ENCODE measurements at regions of chr4 and their contacts with region 1.

Region 1: GRCh38 chr4:48546336-48546735 is 56.3 kb downstream of the ZAR1 start:
- DNase-seq: peak; percentile 51
- H3K4me3 ChIP-seq: no peak overlapping the region
- H3K27ac ChIP-seq: no peak overlapping the region
- H3K4me1 ChIP-seq: peaks cover 5% of the 10 kb centered on the region
- H3K27me3 ChIP-seq: no peaks in the 10 kb centered on the region
- CTCF ChIP-seq: peak; percentile 28 to 51
- POLR2A ChIP-seq: no peak

Region 2: DNA sequence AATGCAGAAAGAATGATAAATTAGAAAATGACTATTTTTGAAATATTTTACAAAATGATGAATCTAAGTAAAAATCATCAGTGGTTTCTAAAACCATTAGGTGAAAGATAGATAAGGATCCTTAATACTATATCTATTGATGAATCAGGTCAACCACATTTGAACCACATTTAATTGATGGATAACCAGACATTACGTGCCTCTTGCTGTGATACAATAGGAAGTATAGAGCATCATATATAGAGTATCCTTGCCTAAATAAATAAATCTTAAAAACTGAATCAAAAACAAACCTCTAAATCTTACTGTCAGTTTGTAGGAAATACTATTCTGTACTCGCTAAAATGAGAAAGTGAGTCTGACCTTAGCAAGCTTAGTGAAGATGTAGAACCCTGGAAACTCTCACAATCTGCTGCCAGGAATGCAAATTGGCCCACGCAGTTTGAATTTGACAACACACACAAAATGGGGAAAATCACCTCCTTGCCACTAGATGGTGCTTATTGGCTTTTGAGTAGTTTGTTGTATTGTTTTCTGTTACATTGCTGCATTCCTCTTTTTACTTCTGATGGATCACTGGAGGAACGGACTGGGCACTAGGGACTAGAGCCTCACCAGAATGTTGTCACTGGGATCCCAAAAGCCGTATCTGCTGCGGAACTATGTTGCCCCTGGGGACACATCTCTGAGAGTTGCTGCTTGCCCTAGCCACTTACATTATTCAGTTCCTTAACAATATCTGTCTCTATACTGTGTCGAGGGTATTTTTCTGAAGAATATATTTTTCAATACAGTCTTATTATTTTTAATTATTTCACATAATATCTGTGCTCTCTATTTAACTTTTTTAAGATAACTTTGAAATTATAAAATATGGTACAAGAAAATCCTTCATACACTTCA is 230.4 kb before region 1 on chr4:
- CTCF ChIA-PET with region 1: interaction called, 9 read pairs
- POLR2A ChIA-PET with region 1: no interaction called
- dilution Hi-C with region 1: no loop called
- intact Hi-C with region 1: loop called (anchors 1 kb)
- DNase-seq: peak; percentile 64
- H3K4me3 ChIP-seq: no peak overlapping the region
- H3K27ac ChIP-seq: no peak overlapping the region
- H3K4me1 ChIP-seq: no peaks in the 10 kb centered on the region
- H3K27me3 ChIP-seq: no peaks in the 10 kb centered on the region
- CTCF ChIP-seq: peak; percentile 57 to 69
- POLR2A ChIP-seq: no peak

Region 3: GRCh38 chr4:48445704-48446103 is 100.6 kb before region 1 on chr4:
- CTCF ChIA-PET with region 1: interaction called, 11 read pairs
- POLR2A ChIA-PET with region 1: no interaction called
- dilution Hi-C with region 1: no loop called
- intact Hi-C with region 1: loop called (anchors 5 kb)
- DNase-seq: peak; percentile 13
- H3K4me3 ChIP-seq: no peak overlapping the region
- H3K27ac ChIP-seq: no peak overlapping the region
- H3K4me1 ChIP-seq: no peaks in the 10 kb centered on the region
- H3K27me3 ChIP-seq: no peaks in the 10 kb centered on the region
- CTCF ChIP-seq: peak; percentile 13 to 18
- POLR2A ChIP-seq: no peak